ENCODE measurements at regions of chr6 and their contacts with region 1.

Region 1: DNA sequence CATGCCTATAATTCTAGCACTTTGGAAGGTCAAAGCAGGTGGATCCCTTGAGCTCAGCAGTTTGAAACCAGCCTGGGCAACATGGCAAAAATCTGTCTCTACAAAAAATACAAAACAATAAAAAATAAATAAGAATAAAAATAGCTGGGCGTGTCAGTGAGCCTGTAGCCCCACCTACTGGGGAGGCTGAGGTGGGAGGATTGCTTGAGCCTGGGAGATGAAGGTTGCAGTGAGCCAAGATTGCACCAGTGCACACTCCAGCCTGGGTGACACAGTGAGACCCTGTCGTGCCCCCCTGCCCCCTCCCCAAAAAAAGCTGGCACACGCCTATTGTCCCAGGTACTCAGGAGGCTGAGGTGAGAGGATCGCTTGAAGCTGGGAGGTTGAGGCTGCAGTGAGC is 35.1 kb upstream of the SRPK1 start:
- DNase-seq: peak; percentile 52
- H3K4me3 Mint-ChIP-seq: no peak overlapping the region
- H3K27ac Mint-ChIP-seq: no peak overlapping the region
- H3K4me1 Mint-ChIP-seq: peaks cover 11% of the 10 kb centered on the region
- H3K27me3 Mint-ChIP-seq: peaks cover 10% of the 10 kb centered on the region

Region 2: GRCh38 chr6:35737413-35738211 is 218.4 kb before region 1 on chr6:
- CTCF ChIA-PET with region 1: interaction called, 6 read pairs
- intact Hi-C with region 1: loop called (anchors 1 kb)
- DNase-seq: no peak
- H3K4me3 Mint-ChIP-seq: peak overlapping the region; percentile 29
- H3K27ac Mint-ChIP-seq: peak overlapping the region; percentile 77
- H3K4me1 Mint-ChIP-seq: peaks cover 47% of the 10 kb centered on the region
- H3K27me3 Mint-ChIP-seq: no peaks in the 10 kb centered on the region

Region 3: GRCh38 chr6:35757456-35758123 is 198.4 kb before region 1 on chr6:
- CTCF ChIA-PET with region 1: interaction called, 3 read pairs
- intact Hi-C with region 1: loop called (anchors 5 kb)
- DNase-seq: peak; percentile 31
- H3K4me3 Mint-ChIP-seq: no peak overlapping the region
- H3K27ac Mint-ChIP-seq: no peak overlapping the region
- H3K4me1 Mint-ChIP-seq: peaks cover 2% of the 10 kb centered on the region
- H3K27me3 Mint-ChIP-seq: peaks cover 25% of the 10 kb centered on the region